ENCODE measurements at regions of chr1 and their contacts with region 1.

Region 1: GRCh38 chr1:116504308-116505156 is 66.3 kb downstream of the CD58 start:
- DNase-seq: peak; percentile 72
- ATAC-seq: peak; percentile 97
- H3K4me3 Mint-ChIP-seq: peak overlapping the region; percentile 50
- H3K27ac Mint-ChIP-seq: peak overlapping the region; percentile 87
- H3K4me1 Mint-ChIP-seq: peaks cover 63% of the 10 kb centered on the region
- H3K27me3 Mint-ChIP-seq: no peaks in the 10 kb centered on the region

Region 2: DNA sequence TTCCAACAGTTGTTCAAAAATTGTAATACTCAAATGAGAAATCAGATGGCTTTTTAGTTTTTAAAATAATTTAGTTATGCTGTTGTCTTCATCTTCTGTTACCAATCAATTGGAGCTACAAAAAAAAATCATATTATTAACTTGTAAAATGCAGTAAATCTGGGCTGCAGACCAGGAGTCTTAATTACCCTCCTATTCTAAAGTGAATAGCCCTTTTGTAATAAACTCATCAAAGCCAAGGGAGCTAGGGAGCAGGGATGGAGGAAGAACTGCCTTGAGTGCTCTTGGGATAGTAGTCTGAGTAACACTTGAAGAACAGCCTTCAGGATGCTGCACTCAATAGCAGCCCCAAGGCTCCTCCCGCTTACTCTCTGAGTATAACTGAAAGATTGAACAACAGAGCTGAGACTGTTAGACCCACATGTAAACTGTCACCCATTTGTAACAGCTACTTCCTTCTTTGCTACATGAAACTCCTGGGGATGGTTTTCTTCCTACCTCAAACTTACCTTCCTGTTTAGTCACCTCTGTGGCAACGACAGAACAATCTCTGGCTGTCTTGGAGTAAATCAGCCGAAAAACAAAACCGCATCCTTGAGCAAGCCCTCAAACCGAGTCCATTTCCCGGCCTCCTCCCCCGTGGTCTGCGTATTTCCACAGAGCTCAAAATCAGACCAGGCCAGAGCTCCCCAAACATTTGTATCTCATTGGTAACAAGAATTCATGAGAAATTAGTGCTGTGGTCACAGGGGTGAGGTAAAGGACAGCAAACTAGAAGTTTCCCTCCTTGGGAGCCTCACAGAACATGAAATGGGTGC is 10.4 kb after region 1 on chr1:
- POLR2A ChIA-PET with region 1: interaction called, 46 read pairs
- DNase-seq: peak; percentile 53
- ATAC-seq: peak; percentile 90
- H3K4me3 Mint-ChIP-seq: peak overlapping the region; percentile 65
- H3K27ac Mint-ChIP-seq: peak overlapping the region; percentile 88
- H3K4me1 Mint-ChIP-seq: peaks cover 55% of the 10 kb centered on the region
- H3K27me3 Mint-ChIP-seq: no peaks in the 10 kb centered on the region

Region 3: DNA sequence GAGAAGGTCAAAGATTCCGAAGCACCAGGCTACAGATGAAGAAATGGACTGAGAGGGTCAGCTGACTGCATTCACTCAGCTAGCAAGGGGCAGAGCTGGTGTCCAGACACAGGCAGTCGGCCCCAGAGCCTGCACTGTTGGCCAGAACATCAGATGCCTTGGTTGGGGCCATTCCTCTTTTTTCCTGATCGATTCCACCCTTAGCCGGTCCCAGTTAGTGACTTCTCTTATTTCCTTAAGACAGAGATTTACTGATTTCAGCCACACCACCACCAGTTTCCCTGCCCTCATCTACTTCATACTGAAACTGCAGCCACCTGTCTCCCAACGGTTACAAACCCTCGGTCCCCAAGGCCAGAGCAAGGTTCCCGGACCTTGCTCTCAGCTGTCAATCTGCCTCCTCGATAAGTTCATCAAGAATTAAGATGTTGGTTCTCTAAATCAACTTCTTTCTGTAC is 54.8 kb after region 1 on chr1:
- POLR2A ChIA-PET with region 1: no interaction called
- DNase-seq: no peak
- ATAC-seq: no peak
- H3K4me3 Mint-ChIP-seq: no peak overlapping the region
- H3K27ac Mint-ChIP-seq: no peak overlapping the region
- H3K4me1 Mint-ChIP-seq: peaks cover 36% of the 10 kb centered on the region
- H3K27me3 Mint-ChIP-seq: no peaks in the 10 kb centered on the region

Measured in activated naive CD8-positive, alpha-beta T cell treated with anti-CD3 and anti-CD28 coated beads, Interleukin-2, amount 10 ng/mL, durations not matched to agents 7 days and 5 days (primary cell).